Activated CD4-positive, alpha-beta T cell treated with anti-CD3 and anti-CD28 coated beads for 36 hours (primary cell): ENCODE measurements at regions of chr11 and their contacts with region 1.

Region 1: GRCh38 chr11:83071567-83072349 is at the start of gene RAB30:
- DNase-seq: peak; percentile 95
- ATAC-seq: peak; percentile 98
- H3K4me3 Mint-ChIP-seq: no peak within 1 kb of the TSS
- H3K27ac Mint-ChIP-seq: no peak within 1 kb of the TSS
- H3K4me1 Mint-ChIP-seq: peaks cover 33% of the 10 kb centered on the region
- H3K27me3 Mint-ChIP-seq: no peaks in the 10 kb centered on the region
- total RNA-seq, gene RAB30: 11.4 to 13.2 TPM

Region 2: DNA sequence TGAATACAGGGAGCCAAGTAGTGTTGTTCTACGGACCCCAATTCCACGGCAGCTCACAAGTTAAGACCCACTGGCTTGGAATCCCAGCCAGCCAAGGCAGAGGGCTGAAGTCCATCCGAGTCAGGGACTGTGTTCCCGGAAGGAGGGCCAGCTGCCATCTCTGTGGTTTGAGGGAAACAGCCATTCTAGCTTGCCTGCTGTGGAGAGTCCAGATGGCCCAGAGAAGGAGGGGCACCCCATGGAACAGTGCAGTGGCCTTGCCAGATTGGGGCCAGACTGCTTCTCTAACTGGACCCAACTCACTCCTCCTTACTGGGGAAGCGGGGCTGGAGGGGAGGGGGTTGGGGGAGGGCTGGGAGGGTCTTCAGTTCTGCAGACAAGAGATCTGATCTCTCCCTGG is 494.5 kb before region 1 on chr11:
- CTCF ChIA-PET with region 1: no interaction called
- POLR2A ChIA-PET with region 1: no interaction called
- intact Hi-C with region 1: no loop called
- DNase-seq: no peak
- ATAC-seq: no peak
- H3K4me3 Mint-ChIP-seq: no peak overlapping the region
- H3K27ac Mint-ChIP-seq: no peak overlapping the region
- H3K4me1 Mint-ChIP-seq: no peaks in the 10 kb centered on the region
- H3K27me3 Mint-ChIP-seq: no peaks in the 10 kb centered on the region

Region 3: GRCh38 chr11:82906244-82906654 is 165.5 kb before region 1 on chr11:
- CTCF ChIA-PET with region 1: interaction called, 7 read pairs
- POLR2A ChIA-PET with region 1: interaction called, 7 read pairs
- intact Hi-C with region 1: loop called in 1 of 2 experiments (anchors 1 kb)
- DNase-seq: no peak
- ATAC-seq: no peak
- H3K4me3 Mint-ChIP-seq: no peak overlapping the region
- H3K27ac Mint-ChIP-seq: no peak overlapping the region
- H3K4me1 Mint-ChIP-seq: peaks cover 46% of the 10 kb centered on the region
- H3K27me3 Mint-ChIP-seq: no peaks in the 10 kb centered on the region

Region 4: GRCh38 chr11:82978422-82979099 is 93.2 kb before region 1 on chr11:
- CTCF ChIA-PET with region 1: no interaction called
- POLR2A ChIA-PET with region 1: no interaction called
- intact Hi-C with region 1: loop called (anchors 2 kb)
- DNase-seq: no peak
- ATAC-seq: peak; percentile 69
- H3K4me3 Mint-ChIP-seq: no peak overlapping the region
- H3K27ac Mint-ChIP-seq: peak overlapping the region; percentile 32
- H3K4me1 Mint-ChIP-seq: peaks cover 40% of the 10 kb centered on the region
- H3K27me3 Mint-ChIP-seq: no peaks in the 10 kb centered on the region

Region 5: GRCh38 chr11:83007909-83008580 is 63.7 kb before region 1 on chr11:
- CTCF ChIA-PET with region 1: interaction called, 3 read pairs
- POLR2A ChIA-PET with region 1: interaction called, 12 read pairs
- intact Hi-C with region 1: loop called (anchors 2 kb)
- DNase-seq: peak; percentile 14
- ATAC-seq: no peak
- H3K4me3 Mint-ChIP-seq: peak overlapping the region; percentile 20
- H3K27ac Mint-ChIP-seq: peak overlapping the region; percentile 63
- H3K4me1 Mint-ChIP-seq: peaks cover 45% of the 10 kb centered on the region
- H3K27me3 Mint-ChIP-seq: no peaks in the 10 kb centered on the region

Region 6: DNA sequence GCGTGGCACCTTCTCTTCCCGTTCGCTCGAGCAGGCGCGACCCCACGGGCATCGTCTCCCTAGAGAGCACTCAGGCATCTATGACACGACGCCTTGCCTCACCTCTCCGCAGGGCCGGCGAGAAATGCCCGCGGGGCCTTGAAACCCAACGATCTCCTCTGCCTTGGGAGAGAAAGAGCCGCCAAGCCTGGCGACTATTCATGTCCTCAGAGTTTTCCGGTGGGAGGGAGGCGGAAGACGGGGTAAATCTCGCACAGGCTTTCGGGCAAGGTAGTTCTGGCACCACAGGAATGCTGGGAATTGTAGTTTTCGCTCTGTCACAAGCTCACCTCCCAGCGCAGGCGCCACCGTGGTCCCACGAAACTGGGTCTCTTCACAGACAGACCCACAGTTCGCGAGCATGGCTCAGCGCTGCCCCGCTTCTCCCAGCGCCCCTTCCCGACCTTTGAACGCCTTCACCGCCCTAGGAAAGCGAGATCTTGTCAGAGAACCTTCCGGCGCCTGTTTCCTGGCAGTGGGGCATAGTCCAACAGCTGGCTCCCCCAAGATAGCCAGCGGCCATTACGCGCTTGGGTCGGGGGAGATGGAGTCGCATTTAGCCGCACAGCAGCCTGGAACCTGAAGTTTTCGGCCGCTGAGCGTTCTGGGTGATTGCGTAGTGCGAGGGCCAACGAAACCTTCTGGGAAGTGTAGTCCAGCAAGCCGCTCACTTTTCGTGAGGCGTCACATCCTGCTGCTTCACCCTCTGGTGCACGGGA is 214.2 kb after region 1 on chr11 and contains the start of gene CCDC90B:
- CTCF ChIA-PET with region 1: interaction called, 6 read pairs
- POLR2A ChIA-PET with region 1: interaction called, 3 read pairs
- intact Hi-C with region 1: loop called (anchors 1 kb)
- DNase-seq: peak; percentile 96
- ATAC-seq: peak; percentile 94
- H3K4me3 Mint-ChIP-seq: peak within 1 kb of the TSS; percentile 81
- H3K27ac Mint-ChIP-seq: peak within 1 kb of the TSS; percentile 98
- H3K4me1 Mint-ChIP-seq: peaks cover 35% of the 10 kb centered on the region
- H3K27me3 Mint-ChIP-seq: no peaks in the 10 kb centered on the region
- total RNA-seq, gene CCDC90B: 30.4 to 32.8 TPM